ENCODE measurements at regions of chr6 and their contacts with region 1.

Region 1: DNA sequence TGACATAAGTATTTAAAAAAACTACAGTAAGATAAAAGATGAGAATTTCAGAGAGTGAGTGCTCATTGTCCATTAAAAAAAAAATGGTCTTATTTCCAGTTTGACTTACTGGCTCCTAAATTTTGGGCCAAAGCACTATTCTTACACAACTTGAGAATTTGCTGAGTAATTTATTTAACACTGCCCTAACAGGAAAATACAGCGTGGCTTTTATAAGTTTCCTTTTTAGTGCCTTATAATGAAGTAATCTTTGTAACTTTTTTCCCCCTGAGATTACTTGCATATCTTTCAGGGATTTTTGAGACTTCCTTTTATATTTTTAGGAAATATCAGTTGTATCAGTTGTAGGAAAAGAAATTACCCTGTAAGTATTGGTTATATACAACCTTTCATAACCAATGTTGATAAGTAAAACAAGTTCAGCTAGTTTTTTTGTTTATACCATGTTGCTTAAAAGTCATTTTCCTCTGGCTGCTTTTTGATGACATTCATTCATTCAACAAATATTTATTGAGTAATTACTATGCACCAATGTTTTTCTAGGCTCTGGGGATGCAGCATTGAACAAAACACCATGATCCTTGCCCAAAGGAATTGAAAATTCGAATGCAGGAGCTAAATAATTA is 106.4 kb upstream of the SGK1 start:
- DNase-seq: no peak
- H3K4me3 Mint-ChIP-seq: no peak overlapping the region
- H3K27ac Mint-ChIP-seq: no peak overlapping the region
- H3K4me1 Mint-ChIP-seq: peaks cover 25% of the 10 kb centered on the region
- H3K27me3 Mint-ChIP-seq: no peaks in the 10 kb centered on the region

Region 2: GRCh38 chr6:134398453-134398852 is 25.8 kb before region 1 on chr6:
- CTCF ChIA-PET with region 1: no interaction called
- intact Hi-C with region 1: loop called (anchors 2 kb)
- DNase-seq: peak; percentile 44
- H3K4me3 Mint-ChIP-seq: no peak overlapping the region
- H3K27ac Mint-ChIP-seq: peak overlapping the region; percentile 5
- H3K4me1 Mint-ChIP-seq: peaks cover 19% of the 10 kb centered on the region
- H3K27me3 Mint-ChIP-seq: no peaks in the 10 kb centered on the region

Measured in activated naive CD4-positive, alpha-beta T cell treated with anti-CD3 and anti-CD28 coated beads for 36 hours (primary cell).